ENCODE measurements at regions of chr1 and their contacts with region 1.

Region 1: DNA sequence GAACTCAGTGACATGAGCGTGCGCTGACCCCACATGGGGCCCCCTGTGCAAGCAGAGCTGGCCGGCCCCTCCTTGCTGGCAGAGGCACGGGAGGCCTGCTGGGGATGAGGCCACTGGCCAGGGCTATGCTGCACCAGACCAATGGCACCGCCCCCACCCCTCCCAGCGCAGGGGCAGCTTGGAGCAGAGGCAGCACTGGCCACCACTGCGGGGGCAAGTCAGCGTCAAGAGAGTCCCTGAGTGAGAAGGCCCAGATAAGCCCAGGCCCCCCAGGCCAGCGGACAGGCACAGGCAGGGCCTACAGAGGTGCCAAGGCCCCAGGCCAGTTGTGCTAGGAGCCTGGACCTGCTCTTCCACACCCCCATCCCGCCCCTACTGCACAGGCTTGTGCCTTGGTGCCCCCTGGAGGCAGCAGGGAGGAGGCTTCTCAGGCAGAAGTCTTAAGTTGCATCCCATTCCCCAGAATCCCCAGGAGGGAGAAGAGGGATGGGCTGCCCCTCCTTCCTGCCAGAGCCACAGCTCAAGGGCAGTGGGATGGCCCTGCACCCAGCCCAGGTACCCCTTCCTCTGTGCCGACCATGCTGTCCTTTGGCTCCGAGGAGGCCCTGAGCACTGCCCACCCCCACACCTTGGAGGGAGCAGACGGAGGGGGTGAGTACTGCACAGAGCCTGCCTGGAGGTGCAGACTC is 35.8 kb downstream of the EPHX1 start:
- DNase-seq: peak; percentile 84
- H3K4me3 ChIP-seq: no peak overlapping the region
- H3K27ac ChIP-seq: peak overlapping the region in 3 of 8 donors; percentile 72 to 90 (median 80)
- H3K4me1 ChIP-seq: peaks cover 22 to 71% (median 40%) of the 10 kb centered on the region in 6 donors
- H3K27me3 ChIP-seq: no peaks in the 10 kb centered on the region
- CTCF ChIP-seq: peak in 10 of 11 experiments; percentile 13 to 71 (median 58)
- POLR2A ChIP-seq: no peak

Region 2: DNA sequence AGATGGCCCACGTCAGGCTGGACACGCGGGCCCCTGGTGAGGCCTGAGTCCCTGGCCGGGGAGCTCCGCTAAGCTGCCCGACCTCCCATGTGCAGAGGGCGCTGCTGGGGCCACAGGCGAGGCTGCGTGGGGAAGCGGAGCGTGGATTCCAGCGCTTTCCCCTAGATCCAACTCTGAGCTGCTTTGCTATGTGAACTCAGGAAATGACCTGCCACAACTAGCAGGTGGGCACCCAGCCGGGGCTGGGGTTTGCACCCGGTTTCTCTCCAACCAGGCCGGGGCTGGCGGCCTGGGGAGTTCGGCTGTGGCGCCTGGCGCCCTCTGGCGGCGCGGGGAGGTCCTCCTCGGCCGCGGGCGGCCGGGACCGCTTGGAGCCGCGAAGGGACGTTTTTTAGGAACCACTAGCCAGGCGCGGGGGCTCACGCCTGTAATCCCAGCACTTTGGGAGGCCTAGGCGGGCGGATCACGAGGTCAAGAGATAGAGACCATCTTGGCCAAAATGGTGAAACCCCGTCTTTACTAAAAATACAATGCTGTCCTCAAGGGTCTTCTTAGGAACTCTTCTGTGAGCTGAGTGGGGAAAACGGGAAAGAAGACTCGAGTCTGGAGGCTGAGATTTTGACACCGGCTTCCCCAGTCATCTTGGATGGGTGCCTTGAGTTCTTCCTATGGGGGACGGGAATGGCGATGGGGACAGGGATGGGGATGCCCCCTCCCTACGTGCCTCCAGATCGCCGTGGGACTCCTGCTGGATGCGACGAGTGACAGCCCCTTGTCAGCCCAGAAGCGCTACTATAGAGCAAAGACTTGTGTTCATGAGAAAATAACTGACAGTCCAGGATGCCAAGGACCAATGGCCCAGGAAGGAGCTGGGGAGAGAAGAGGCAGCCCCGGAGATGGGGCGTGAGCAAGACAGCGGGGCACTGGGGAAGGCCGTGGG is 65.7 kb after region 1 on chr1:
- intact Hi-C with region 1: loop called (anchors 10 kb)
- DNase-seq: peak; percentile 92
- H3K4me3 ChIP-seq: peak overlapping the region in 1 of 8 donors; percentile 3
- H3K27ac ChIP-seq: peak overlapping the region in 2 of 8 donors; percentile 1 to 6
- H3K4me1 ChIP-seq: peaks cover 0 to 26% (median 16%) of the 10 kb centered on the region in 6 donors
- H3K27me3 ChIP-seq: no peaks in the 10 kb centered on the region
- CTCF ChIP-seq: peak; percentile 61 to 98 (median 94)
- POLR2A ChIP-seq: no peak

Measured in spleen (tissue), 13 donors.